A673 (cell line): ENCODE measurements at regions of chr14 and their contacts with region 1.

Region 1: GRCh38 chr14:83294941-83295340 is 1761.3 kb upstream of the SEL1L start:
- DNase-seq: peak; percentile 82
- H3K4me3 ChIP-seq: no peak overlapping the region
- H3K27ac ChIP-seq: peak overlapping the region; percentile 83
- H3K4me1 ChIP-seq: peaks cover 46% of the 10 kb centered on the region
- H3K27me3 ChIP-seq: no peaks in the 10 kb centered on the region
- CTCF ChIP-seq: no peak

Region 2: DNA sequence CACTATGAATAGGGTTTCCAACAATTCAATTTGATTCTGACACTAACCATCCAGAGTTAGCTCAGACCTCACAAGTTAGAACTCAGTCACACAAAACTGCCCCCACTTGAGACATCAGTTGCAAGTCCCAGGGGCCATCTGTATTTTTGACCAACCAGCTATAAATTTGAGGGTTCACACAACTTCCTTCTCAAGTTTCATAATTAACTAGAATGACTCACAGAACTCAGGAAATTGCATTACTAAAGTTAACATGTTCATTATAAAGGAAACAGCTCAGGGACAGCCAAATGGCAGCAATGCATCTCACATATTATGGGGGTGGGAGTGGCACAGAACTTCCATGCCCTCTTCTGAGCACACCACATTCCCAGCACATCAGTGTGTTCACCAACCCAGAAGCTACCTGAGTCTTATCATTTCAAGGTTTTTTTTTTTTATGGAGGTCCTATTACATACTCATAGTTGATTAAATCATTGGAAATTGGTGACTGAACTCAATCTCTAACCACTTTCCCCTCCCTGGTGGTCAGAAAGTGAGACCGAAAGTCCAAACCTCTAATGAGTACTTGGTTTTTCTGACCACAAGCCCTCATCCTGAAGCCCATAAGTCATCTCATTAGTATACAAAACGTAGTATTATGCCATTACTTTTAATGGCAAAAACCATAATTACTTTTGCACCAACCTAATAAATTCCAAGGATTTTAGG is 39.8 kb before region 1 on chr14:
- CTCF ChIA-PET with region 1: no interaction called
- POLR2A ChIA-PET with region 1: no interaction called
- intact Hi-C with region 1: loop called (anchors 5 kb)
- DNase-seq: peak; percentile 90
- H3K4me3 ChIP-seq: no peak overlapping the region
- H3K27ac ChIP-seq: peak overlapping the region; percentile 42
- H3K4me1 ChIP-seq: peaks cover 55% of the 10 kb centered on the region
- H3K27me3 ChIP-seq: no peaks in the 10 kb centered on the region
- CTCF ChIP-seq: no peak

Region 3: GRCh38 chr14:83282706-83283105 is 12.2 kb before region 1 on chr14:
- CTCF ChIA-PET with region 1: no interaction called
- POLR2A ChIA-PET with region 1: no interaction called
- intact Hi-C with region 1: no loop called
- DNase-seq: no peak
- H3K4me3 ChIP-seq: no peak overlapping the region
- H3K27ac ChIP-seq: no peak overlapping the region
- H3K4me1 ChIP-seq: no peaks in the 10 kb centered on the region
- H3K27me3 ChIP-seq: no peaks in the 10 kb centered on the region
- CTCF ChIP-seq: no peak